ENCODE measurements at regions of chr13 and their contacts with region 1.

Region 1: GRCh38 chr13:44218501-44219240 is 155.0 kb upstream of the SERP2 start:
- DNase-seq: peak in 1 of 2 donors; percentile 89
- H3K4me3 ChIP-seq: no peak overlapping the region
- H3K27ac ChIP-seq: peak overlapping the region; percentile 57
- H3K4me1 ChIP-seq: peaks cover 39% of the 10 kb centered on the region
- H3K27me3 ChIP-seq: no peaks in the 10 kb centered on the region
- CTCF ChIP-seq: no peak
- POLR2A ChIP-seq: no peak

Region 2: GRCh38 chr13:44155422-44156293 is 63.0 kb before region 1 on chr13:
- intact Hi-C with region 1: loop called (anchors 10 kb)
- DNase-seq: no peak
- H3K4me3 ChIP-seq: peak overlapping the region in 1 of 2 donors; percentile 19
- H3K27ac ChIP-seq: peak overlapping the region; percentile 43
- H3K4me1 ChIP-seq: peaks cover 23% of the 10 kb centered on the region
- H3K27me3 ChIP-seq: no peaks in the 10 kb centered on the region
- CTCF ChIP-seq: no peak
- POLR2A ChIP-seq: no peak

Measured in vagina (tissue), 2 donors.